ENCODE measurements at regions of chr17 and their contacts with region 1.

Region 1: DNA sequence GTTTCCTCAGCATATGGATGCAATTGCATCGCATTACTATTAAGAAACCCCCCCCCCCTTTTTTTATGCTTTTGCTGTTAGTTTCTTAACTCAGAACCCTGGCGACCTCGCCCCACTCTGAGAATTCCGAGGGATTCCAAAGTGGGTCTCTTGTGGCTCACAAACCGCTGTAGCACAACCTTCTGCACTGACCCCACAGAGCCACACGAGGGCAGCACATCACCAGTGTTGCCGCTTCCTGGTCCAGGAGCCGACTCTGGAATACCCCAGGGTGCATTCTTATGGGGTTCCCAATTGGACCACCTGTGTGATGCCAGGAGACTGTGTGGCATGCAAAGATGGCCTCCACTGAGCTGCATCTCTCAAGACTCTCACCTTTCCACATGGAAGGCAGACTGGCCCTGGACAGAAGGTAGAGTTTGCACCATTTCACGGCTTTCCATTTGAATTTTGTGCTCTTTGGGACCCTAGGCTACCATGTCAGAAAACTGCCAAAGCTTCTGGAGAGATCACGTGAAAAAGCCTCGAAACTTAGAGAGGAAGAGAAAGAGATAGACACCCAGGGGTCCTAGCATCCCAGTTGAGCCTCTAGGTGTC is 432.7 kb upstream of the ASIC2 start:
- DNase-seq: no peak
- ATAC-seq: no peak
- H3K4me3 Mint-ChIP-seq: no peak overlapping the region
- H3K27ac Mint-ChIP-seq: no peak overlapping the region
- H3K4me1 Mint-ChIP-seq: no peaks in the 10 kb centered on the region
- H3K27me3 Mint-ChIP-seq: peaks cover 6% of the 10 kb centered on the region

Region 2: DNA sequence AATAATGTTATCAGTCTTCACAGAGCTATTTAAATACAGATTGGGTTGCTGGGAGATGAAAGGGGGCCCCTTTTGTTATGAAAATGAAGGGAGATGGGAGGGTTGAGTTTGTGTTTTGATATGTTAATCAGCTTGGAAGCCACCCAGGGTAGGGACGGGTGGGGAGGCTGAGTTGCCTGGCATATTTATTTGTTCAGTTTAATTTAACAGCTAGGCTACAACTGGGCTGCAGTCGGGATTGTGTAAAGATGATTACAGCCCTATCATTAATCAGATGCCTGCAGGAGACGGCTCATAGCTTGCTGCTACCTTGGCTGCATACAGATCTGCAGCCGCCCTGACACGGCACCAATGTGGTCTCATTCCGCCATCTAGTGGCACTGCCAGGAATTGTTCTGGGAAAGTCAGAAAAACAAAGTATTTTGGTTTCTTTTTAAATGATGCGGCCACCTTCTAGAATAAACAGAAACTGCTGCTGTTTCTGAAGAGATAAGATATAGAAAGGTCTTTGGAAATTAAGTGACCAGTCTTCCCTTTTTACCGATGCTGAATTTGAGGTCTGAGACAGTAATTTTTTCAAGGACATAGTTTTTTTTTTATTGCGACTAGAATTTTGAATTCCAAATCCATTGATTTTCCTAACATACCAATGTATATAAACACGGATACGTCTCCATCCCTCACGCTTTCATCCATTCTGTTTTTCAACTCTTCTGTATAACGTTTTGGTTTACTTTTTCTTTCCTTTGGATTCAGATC is 25.3 kb after region 1 on chr17:
- CTCF ChIA-PET with region 1: interaction called, 10 read pairs
- DNase-seq: peak; percentile 79
- ATAC-seq: peak; percentile 75
- H3K4me3 Mint-ChIP-seq: peak overlapping the region; percentile 38
- H3K27ac Mint-ChIP-seq: no peak overlapping the region
- H3K4me1 Mint-ChIP-seq: peaks cover 8% of the 10 kb centered on the region
- H3K27me3 Mint-ChIP-seq: peaks cover 22% of the 10 kb centered on the region